Activated CD4-positive, alpha-beta memory T cell treated with anti-CD3 and anti-CD28 coated beads for 36 hours (primary cell): ENCODE measurements at regions of chr1 and their contacts with region 1.

Region 1: DNA sequence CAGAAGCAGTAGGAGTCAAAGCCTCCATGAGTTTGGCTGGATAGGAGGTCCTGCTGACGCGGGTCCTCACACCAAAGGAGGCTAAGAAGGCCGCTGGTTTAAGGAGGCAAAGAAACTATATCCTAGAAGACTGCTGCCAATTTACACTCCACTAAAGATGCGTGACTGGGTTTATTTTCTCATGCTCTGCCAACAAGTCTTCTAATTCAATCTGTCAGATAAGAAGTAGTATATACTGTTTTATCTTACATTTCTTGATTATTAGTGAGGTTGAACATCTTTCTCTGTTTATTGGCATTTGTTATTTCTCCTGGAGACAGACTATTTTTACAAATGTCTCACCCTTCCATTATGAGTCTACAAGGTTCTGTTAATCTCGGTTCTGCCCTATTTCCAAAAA is 34.1 kb downstream of the ACBD6 start:
- DNase-seq: no peak
- H3K4me3 Mint-ChIP-seq: no peak overlapping the region
- H3K27ac Mint-ChIP-seq: no peak overlapping the region
- H3K4me1 Mint-ChIP-seq: peaks cover 7% of the 10 kb centered on the region
- H3K27me3 Mint-ChIP-seq: no peaks in the 10 kb centered on the region

Region 2: GRCh38 chr1:180188091-180188506 is 280.2 kb before region 1 on chr1:
- CTCF ChIA-PET with region 1: no interaction called
- POLR2A ChIA-PET with region 1: no interaction called
- intact Hi-C with region 1: loop called (anchors 10 kb)
- DNase-seq: peak; percentile 26
- H3K4me3 Mint-ChIP-seq: no peak overlapping the region
- H3K27ac Mint-ChIP-seq: no peak overlapping the region
- H3K4me1 Mint-ChIP-seq: no peaks in the 10 kb centered on the region
- H3K27me3 Mint-ChIP-seq: no peaks in the 10 kb centered on the region

Region 3: DNA sequence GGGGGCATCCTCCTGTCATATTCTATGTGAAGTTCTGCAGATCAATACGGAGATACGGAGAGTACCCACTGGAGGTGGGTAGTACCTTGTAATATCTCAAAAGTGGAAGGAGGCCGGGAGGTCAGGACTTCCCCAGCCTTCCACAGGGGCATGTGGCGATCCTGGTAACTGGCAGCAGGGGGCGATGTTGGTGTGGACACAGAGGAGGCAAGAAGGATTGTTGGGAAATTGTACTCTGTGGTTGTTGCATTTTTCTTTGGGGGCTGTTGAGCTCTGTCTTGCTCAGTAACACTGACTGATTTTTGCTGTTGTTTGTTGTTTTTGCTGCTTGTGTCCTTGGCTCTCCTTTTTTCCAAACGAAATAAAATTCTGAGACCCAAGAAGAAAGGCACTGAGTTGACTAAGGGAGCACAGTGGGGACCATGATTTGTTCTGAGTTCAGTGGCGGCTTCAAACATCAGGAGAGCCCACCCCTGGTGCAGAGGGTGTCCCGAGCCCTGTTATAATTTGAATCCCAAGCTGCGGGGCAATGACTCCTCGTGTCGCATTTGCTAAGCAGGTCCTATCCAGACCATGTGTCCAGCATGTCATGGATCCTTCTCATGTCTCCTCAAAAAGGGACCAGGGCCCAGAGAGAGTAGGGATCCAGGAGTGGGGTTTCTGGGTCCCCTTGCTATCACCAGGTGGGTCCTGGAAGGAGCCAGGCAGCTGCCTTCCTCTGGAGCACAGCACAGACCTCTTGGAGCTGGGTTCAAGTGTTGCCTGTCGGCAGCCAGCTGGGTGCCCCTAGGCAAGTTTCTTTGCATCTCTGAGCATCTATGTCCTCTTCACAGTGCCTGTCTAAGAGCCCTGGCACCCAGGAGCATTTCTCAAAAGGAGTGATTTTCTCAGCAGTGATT is 215.4 kb before region 1 on chr1:
- CTCF ChIA-PET with region 1: interaction called, 14 read pairs
- POLR2A ChIA-PET with region 1: no interaction called
- intact Hi-C with region 1: no loop called
- DNase-seq: peak; percentile 85
- H3K4me3 Mint-ChIP-seq: no peak overlapping the region
- H3K27ac Mint-ChIP-seq: no peak overlapping the region
- H3K4me1 Mint-ChIP-seq: no peaks in the 10 kb centered on the region
- H3K27me3 Mint-ChIP-seq: peaks cover 58% of the 10 kb centered on the region

Region 4: GRCh38 chr1:180365039-180365438 is 103.3 kb before region 1 on chr1:
- CTCF ChIA-PET with region 1: no interaction called
- POLR2A ChIA-PET with region 1: no interaction called
- intact Hi-C with region 1: loop called (anchors 10 kb)
- DNase-seq: no peak
- H3K4me3 Mint-ChIP-seq: no peak overlapping the region
- H3K27ac Mint-ChIP-seq: no peak overlapping the region
- H3K4me1 Mint-ChIP-seq: no peaks in the 10 kb centered on the region
- H3K27me3 Mint-ChIP-seq: no peaks in the 10 kb centered on the region

Region 5: GRCh38 chr1:180494370-180494769 is 26.1 kb after region 1 on chr1:
- CTCF ChIA-PET with region 1: no interaction called
- POLR2A ChIA-PET with region 1: no interaction called
- intact Hi-C with region 1: no loop called
- DNase-seq: no peak
- H3K4me3 Mint-ChIP-seq: no peak overlapping the region
- H3K27ac Mint-ChIP-seq: no peak overlapping the region
- H3K4me1 Mint-ChIP-seq: peaks cover 14% of the 10 kb centered on the region
- H3K27me3 Mint-ChIP-seq: no peaks in the 10 kb centered on the region

Region 6: GRCh38 chr1:180842052-180842451 is 373.7 kb after region 1 on chr1:
- CTCF ChIA-PET with region 1: no interaction called
- POLR2A ChIA-PET with region 1: no interaction called
- intact Hi-C with region 1: no loop called
- DNase-seq: no peak
- H3K4me3 Mint-ChIP-seq: no peak overlapping the region
- H3K27ac Mint-ChIP-seq: no peak overlapping the region
- H3K4me1 Mint-ChIP-seq: peaks cover under 1% of the 10 kb centered on the region
- H3K27me3 Mint-ChIP-seq: no peaks in the 10 kb centered on the region